Heart left ventricle (tissue), 16 donors: ENCODE measurements at regions of chr16 and their contacts with region 1.

Region 1: GRCh38 chr16:89241187-89242007 is 23.9 kb downstream of the ZNF778 start:
- DNase-seq: peak; percentile 59 to 82 (median 72)
- ATAC-seq: peak; percentile 72 to 84 (median 77)
- H3K4me3 ChIP-seq: peak overlapping the region; percentile 11 to 97 (median 76)
- H3K27ac ChIP-seq: peak overlapping the region; percentile 89 to 99 (median 94)
- H3K4me1 ChIP-seq: peaks cover 0 to 16% (median 6%) of the 10 kb centered on the region in 12 donors
- H3K27me3 ChIP-seq: no peaks in the 10 kb centered on the region
- CTCF ChIP-seq: no peak
- POLR2A ChIP-seq: peak in 1 of 2 donors; percentile 76

Region 2: DNA sequence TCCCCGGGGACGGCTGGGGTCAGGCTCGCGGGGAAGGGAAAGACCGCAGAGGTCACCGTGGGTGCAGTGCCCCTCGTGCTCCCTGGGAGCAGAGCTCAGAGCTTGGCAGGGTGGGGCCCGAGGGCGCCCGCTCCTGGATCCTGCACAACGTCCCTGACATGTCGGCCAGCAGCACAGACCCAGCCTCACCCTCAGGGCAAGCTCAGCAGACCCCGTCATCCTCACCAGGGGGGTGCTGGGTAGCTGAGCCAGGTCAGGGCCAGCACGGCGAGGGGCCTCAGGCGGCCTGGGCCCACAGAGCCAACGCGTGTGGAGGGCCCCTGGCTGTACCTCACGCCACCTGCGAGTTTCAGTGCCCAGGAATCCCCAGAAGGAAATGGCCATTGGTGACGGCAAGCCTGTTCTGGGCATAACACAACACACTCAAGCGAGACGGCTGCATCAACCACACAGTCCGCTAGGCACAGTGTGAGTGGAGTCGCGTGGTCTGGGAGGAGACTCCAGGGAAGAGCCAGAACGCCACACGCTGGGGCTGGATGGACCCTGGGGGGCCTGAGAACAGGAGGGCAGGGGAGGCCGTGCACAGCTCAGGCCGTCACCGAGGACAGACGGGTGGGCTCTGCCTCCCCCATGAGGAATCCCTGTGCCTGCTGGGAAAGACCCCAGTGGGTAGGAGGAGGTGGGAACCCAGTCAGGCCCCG is 36.4 kb after region 1 on chr16:
- intact Hi-C with region 1: no loop called
- DNase-seq: no peak
- ATAC-seq: peak in 3 of 4 donors; percentile 7 to 15 (median 11)
- H3K4me3 ChIP-seq: no peak overlapping the region
- H3K27ac ChIP-seq: peak overlapping the region in 2 of 12 donors; percentile 17 to 24
- H3K4me1 ChIP-seq: peaks cover 0 to 5% (median 0%) of the 10 kb centered on the region in 12 donors
- H3K27me3 ChIP-seq: no peaks in the 10 kb centered on the region
- CTCF ChIP-seq: no peak
- POLR2A ChIP-seq: no peak

Region 3: GRCh38 chr16:89289428-89290395 is 48.3 kb after region 1 on chr16:
- intact Hi-C with region 1: loop called in 2 of 10 experiments (anchors 5 kb)
- DNase-seq: peak; percentile 59 to 85 (median 76)
- ATAC-seq: peak; percentile 48 to 83 (median 79)
- H3K4me3 ChIP-seq: no peak overlapping the region
- H3K27ac ChIP-seq: no peak overlapping the region
- H3K4me1 ChIP-seq: peaks cover 0 to 17% (median 5%) of the 10 kb centered on the region in 12 donors
- H3K27me3 ChIP-seq: no peaks in the 10 kb centered on the region
- CTCF ChIP-seq: peak; percentile 68 to 88 (median 82)
- POLR2A ChIP-seq: no peak

Region 4: GRCh38 chr16:89507834-89508590 is 266.6 kb after region 1 on chr16 and contains the start of gene SPG7:
- intact Hi-C with region 1: loop called in 1 of 10 experiments (anchors 5 kb)
- DNase-seq: peak; percentile 88 to 95 (median 89)
- ATAC-seq: peak; percentile 74 to 94 (median 88)
- H3K4me3 ChIP-seq: peak within 1 kb of the TSS; percentile 57 to 98 (median 95)
- H3K27ac ChIP-seq: peak within 1 kb of the TSS; percentile 89 to 100 (median 97)
- H3K4me1 ChIP-seq: peaks cover 4 to 49% (median 37%) of the 10 kb centered on the region in 12 donors
- H3K27me3 ChIP-seq: no peaks in the 10 kb centered on the region
- CTCF ChIP-seq: peak in 2 of 12 donors; percentile 4 to 8
- POLR2A ChIP-seq: peak; percentile 43 to 97
- total RNA-seq, gene SPG7: 84.0 to 168 (median 95.9) TPM

Region 5: GRCh38 chr16:89560378-89561141 is 319.2 kb after region 1 on chr16 and contains the start of gene RPL13:
- intact Hi-C with region 1: loop called in 1 of 10 experiments (anchors 10 kb)
- DNase-seq: peak; percentile 95 to 97 (median 96)
- ATAC-seq: peak; percentile 94 to 97 (median 96)
- H3K4me3 ChIP-seq: peak within 1 kb of the TSS; percentile 33 to 97 (median 84)
- H3K27ac ChIP-seq: peak within 1 kb of the TSS; percentile 88 to 99 (median 95)
- H3K4me1 ChIP-seq: peaks cover 8 to 64% (median 30%) of the 10 kb centered on the region in 12 donors
- H3K27me3 ChIP-seq: no peaks in the 10 kb centered on the region
- CTCF ChIP-seq: peak in 1 of 12 donors; percentile 6
- POLR2A ChIP-seq: peak; percentile 68 to 97
- total RNA-seq, gene RPL13: 701 to 3,315 (median 1,152) TPM

Region 6: GRCh38 chr16:89641458-89642119 is 400.2 kb after region 1 on chr16:
- intact Hi-C with region 1: loop called in 2 of 10 experiments (anchors 5 to 10 kb)
- DNase-seq: peak in 1 of 5 donors; percentile 62
- ATAC-seq: no peak
- H3K4me3 ChIP-seq: peak overlapping the region in 7 of 12 donors; percentile 40 to 62 (median 48)
- H3K27ac ChIP-seq: no peak overlapping the region
- H3K4me1 ChIP-seq: peaks cover 0 to 17% (median 7%) of the 10 kb centered on the region in 12 donors
- H3K27me3 ChIP-seq: no peaks in the 10 kb centered on the region
- CTCF ChIP-seq: peak in 1 of 12 donors; percentile 2
- POLR2A ChIP-seq: no peak